ENCODE measurements at regions of chr6 and their contacts with region 1.

Region 1: GRCh38 chr6:11093589-11094410 is at the start of gene SMIM13:
- DNase-seq: peak; percentile 98
- ATAC-seq: peak; percentile 95
- H3K4me3 Mint-ChIP-seq: peak within 1 kb of the TSS; percentile 96
- H3K27ac Mint-ChIP-seq: peak within 1 kb of the TSS; percentile 99
- H3K4me1 Mint-ChIP-seq: peaks cover 25% of the 10 kb centered on the region
- H3K27me3 Mint-ChIP-seq: no peaks in the 10 kb centered on the region
- total RNA-seq, gene SMIM13: 6.3 to 7.9 TPM

Region 2: DNA sequence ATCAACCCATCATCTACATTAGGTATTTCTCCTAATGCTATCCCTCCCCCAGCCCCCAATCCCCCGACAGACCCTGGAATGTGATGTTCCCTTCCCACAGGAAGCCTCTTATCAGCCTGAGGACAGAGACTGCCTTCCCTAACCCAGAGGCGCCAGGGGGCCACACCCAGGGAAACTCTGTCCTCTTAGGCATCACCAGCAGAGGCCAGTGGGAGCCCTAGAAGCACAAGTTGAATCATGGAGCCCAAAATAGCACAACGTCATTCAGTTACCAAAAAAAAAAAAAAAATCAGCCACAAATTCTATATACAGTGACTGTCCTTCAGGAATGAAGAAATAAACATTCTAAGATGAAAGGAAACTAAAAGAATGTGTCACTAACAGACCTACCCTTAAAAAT is 1304.6 kb before region 1 on chr6:
- CTCF ChIA-PET with region 1: no interaction called
- POLR2A ChIA-PET with region 1: no interaction called
- intact Hi-C with region 1: no loop called
- DNase-seq: no peak
- ATAC-seq: no peak
- H3K4me3 Mint-ChIP-seq: no peak overlapping the region
- H3K27ac Mint-ChIP-seq: no peak overlapping the region
- H3K4me1 Mint-ChIP-seq: no peaks in the 10 kb centered on the region
- H3K27me3 Mint-ChIP-seq: no peaks in the 10 kb centered on the region

Region 3: DNA sequence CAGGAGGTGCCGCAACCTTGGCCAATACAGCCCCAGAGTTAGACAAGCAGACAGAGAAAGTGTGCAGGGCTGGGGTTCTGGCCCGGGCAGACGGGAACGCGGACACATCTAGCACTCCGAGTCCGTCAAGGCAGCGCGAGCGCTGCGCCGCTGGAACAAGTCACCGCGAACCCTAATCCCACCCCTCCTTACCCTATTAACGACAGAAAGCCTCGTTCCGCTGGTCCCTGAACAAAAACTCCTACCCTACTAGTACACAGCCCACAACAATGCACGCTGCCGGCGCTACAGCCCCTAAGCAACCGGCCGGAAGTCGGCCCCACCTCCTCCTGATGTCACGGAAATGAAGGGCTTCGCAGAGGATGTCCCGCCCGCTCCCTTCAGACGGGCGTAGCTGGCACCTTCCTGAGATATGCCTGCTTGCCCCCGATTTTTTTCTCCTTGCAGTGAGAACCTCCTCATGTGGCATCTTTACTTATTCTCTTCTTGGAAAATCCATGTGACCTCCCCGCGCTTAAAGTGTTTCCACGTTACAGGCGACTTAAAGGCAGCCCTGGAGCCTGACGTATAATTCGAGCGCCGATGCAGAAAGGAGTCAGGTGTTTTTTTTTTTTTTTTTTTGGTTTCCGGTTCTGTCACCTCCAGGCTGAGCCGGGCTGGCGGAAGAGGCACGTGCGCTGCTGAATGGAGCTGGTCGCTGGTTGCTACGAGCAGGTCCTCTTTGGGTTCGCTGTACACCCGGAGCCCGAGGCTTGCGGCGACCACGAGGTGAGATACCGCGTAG is 399.3 kb before region 1 on chr6 and contains the starts of genes C6orf52 and PAK1IP1:
- CTCF ChIA-PET with region 1: no interaction called
- POLR2A ChIA-PET with region 1: interaction called, 3 read pairs
- intact Hi-C with region 1: loop called in 1 of 2 experiments (anchors 1 kb)
- DNase-seq: peak; percentile 95
- ATAC-seq: peak; percentile 97
- H3K4me3 Mint-ChIP-seq: peak within 1 kb of the TSS; percentile 93
- H3K27ac Mint-ChIP-seq: peak within 1 kb of the TSS; percentile 100
- H3K4me1 Mint-ChIP-seq: peaks cover 29% of the 10 kb centered on the region
- H3K27me3 Mint-ChIP-seq: no peaks in the 10 kb centered on the region
- total RNA-seq, gene C6orf52: 1.2 to 2.4 TPM
- total RNA-seq, gene PAK1IP1: 35.6 to 39.4 TPM

Region 4: DNA sequence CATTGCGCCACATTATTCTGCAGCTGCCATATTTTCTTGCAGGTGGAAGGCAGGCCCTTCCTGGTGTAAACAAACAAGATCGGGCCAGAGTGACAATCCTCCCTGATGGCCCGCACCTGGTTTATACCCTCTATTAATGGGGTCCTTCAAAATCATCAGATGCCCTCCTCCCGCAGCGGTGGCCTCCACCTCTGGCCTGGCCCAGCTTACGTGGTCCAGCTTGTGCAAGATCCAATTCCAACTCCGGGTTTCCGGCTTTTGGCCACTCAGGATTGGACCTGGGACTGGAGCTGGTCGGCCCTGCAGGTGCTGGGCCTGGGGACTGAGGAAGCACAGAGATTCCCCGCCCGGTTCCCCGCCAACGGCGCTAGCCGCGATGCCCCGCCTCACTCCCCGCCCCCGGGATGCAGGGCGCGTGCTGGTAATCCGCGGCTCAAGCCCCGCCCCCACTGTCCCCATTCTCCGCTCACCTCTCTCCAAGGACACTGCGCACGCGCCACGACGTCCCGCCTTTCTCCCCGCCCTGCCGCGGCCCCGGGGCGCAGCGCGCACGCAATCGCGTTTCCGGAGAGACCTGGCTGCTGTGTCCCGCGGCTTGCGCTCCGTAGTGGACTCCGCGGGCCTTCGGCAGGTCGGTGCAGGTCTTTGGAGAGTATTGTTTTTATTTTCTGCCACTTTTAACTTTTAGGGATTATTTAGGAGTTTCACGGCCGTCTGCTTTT is 346.4 kb before region 1 on chr6 and contains the start of gene TMEM14B:
- CTCF ChIA-PET with region 1: no interaction called
- POLR2A ChIA-PET with region 1: no interaction called
- intact Hi-C with region 1: loop called in 1 of 2 experiments (anchors 1 kb)
- DNase-seq: peak; percentile 100
- ATAC-seq: peak; percentile 98
- H3K4me3 Mint-ChIP-seq: peak within 1 kb of the TSS; percentile 95
- H3K27ac Mint-ChIP-seq: peak within 1 kb of the TSS; percentile 95
- H3K4me1 Mint-ChIP-seq: peaks cover 40% of the 10 kb centered on the region
- H3K27me3 Mint-ChIP-seq: no peaks in the 10 kb centered on the region
- total RNA-seq, gene TMEM14B: 77.2 to 99.3 TPM

Region 5: DNA sequence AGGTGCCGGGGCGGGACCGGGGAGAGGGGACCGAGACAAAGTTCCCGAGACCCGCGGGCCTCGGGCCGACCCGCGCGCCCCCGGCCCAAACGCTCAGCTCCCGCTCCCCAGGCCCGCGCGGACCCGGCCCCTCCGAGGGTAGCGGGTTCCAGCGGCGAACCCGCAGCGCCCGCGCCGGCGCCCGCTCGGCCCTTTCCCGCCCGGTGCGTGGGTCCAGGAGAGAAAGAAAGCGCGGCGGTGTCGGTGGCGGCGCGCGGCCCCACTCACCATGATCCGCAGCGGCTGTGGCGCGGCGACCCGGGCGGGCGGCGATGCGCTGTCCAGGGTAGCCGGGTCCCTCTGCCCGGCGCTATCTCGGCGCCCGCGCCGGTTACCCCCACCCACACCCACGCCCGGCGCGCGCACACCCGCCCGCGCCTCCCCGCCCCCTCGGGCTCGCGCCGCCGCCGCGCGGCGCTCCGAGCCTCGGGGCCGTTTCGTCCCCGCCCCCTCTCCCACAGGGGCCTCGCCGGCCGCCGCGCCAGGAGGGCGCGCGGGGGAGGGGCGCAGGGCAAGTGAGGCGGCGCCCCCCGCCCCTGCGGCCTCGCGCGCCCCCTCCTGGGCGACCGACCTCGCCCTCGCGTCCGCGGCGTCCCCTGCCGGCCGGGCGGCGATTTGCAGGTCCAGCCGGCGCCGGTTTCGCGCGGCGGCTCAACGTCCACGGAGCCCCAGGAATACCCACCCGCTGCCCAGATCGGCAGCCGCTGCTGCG is 49.7 kb before region 1 on chr6 and contains the start of gene ELOVL2:
- CTCF ChIA-PET with region 1: no interaction called
- POLR2A ChIA-PET with region 1: no interaction called
- intact Hi-C with region 1: loop called in 1 of 2 experiments (anchors 1 kb)
- DNase-seq: peak; percentile 60
- ATAC-seq: peak; percentile 60
- H3K4me3 Mint-ChIP-seq: peak within 1 kb of the TSS; percentile 35
- H3K27ac Mint-ChIP-seq: no peak within 1 kb of the TSS
- H3K4me1 Mint-ChIP-seq: peaks cover 9% of the 10 kb centered on the region
- H3K27me3 Mint-ChIP-seq: peaks cover 57% of the 10 kb centered on the region
- total RNA-seq, gene ELOVL2: not detected

Region 6: DNA sequence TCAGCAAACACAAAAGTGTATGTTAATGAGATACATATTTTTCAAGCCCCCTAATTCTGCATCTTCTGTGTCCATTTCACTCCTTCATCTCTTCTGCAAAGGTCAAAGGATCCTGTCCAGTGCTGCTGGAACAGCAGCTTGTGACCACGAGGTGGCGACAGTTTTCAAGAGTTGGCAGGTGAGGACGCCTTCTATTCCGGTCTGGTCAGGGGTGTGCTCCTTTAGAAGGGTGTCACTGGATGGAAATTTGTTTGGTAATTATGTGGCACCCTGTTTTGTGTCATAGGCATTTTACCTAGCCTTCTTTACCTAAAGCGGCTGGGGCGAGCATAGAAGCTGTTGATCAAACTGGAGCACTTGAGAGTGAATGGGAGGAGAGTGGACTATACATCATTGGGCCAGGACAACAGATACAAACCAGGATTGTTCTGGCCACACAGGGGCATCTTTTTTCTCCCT is 50.6 kb after region 1 on chr6:
- CTCF ChIA-PET with region 1: no interaction called
- POLR2A ChIA-PET with region 1: no interaction called
- intact Hi-C with region 1: loop called (anchors 5 kb)
- DNase-seq: peak; percentile 89
- ATAC-seq: peak; percentile 94
- H3K4me3 Mint-ChIP-seq: no peak overlapping the region
- H3K27ac Mint-ChIP-seq: no peak overlapping the region
- H3K4me1 Mint-ChIP-seq: peaks cover 7% of the 10 kb centered on the region
- H3K27me3 Mint-ChIP-seq: no peaks in the 10 kb centered on the region

Region 7: DNA sequence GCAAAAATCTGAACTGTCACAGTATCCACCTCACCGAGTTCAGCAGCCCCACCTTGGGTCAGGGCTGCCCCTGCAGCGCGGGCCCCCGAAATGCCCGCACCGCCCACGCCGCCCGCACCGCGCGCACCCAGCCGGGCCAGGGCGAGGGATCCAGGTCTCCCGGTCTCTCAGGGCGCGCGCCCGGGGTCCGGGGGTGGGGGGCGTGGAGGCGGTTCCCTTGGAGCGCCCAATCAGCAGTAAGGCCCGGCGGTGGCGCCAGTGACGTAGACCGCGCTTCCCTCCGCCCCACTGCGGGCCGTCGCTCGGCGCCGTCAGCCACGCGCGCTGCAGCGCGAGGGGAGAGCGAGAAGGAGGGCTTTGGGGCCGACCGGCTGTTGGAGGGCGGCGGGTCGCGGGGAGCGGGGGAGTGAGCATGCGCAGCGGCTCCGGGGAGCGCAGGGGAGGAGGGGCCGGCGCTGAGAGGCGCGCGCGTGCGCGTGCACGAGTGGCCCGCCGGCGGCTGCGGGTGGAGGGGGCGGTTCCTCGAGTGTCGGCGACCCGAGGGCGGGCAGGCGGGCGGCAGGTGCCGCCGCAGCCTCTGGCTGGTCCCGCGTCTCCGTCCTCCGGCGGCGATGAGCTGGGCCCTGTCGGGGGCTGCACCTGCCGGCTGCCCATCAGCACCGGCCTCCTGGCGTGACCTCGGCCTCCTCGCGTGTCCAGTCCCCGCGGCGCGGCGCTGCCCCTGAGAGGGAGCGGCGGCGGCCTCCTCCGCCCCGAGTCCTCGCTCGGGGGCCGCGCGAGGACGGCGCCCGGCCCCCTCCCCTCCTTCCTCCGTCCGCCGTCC is 443.6 kb after region 1 on chr6 and contains the start of gene TMEM170B:
- CTCF ChIA-PET with region 1: no interaction called
- POLR2A ChIA-PET with region 1: no interaction called
- intact Hi-C with region 1: loop called in 1 of 2 experiments (anchors 1 kb)
- DNase-seq: peak; percentile 95
- ATAC-seq: peak; percentile 96
- H3K4me3 Mint-ChIP-seq: peak within 1 kb of the TSS; percentile 76
- H3K27ac Mint-ChIP-seq: no peak within 1 kb of the TSS
- H3K4me1 Mint-ChIP-seq: peaks cover 5% of the 10 kb centered on the region
- H3K27me3 Mint-ChIP-seq: peaks cover 8% of the 10 kb centered on the region
- total RNA-seq, gene TMEM170B: 0.98 to 1.3 TPM

Measured in activated CD4-positive, alpha-beta T cell treated with anti-CD3 and anti-CD28 coated beads for 36 hours (primary cell).